A549 (cell line): ENCODE measurements at regions of chr15 and their contacts with region 1.

Region 1: DNA sequence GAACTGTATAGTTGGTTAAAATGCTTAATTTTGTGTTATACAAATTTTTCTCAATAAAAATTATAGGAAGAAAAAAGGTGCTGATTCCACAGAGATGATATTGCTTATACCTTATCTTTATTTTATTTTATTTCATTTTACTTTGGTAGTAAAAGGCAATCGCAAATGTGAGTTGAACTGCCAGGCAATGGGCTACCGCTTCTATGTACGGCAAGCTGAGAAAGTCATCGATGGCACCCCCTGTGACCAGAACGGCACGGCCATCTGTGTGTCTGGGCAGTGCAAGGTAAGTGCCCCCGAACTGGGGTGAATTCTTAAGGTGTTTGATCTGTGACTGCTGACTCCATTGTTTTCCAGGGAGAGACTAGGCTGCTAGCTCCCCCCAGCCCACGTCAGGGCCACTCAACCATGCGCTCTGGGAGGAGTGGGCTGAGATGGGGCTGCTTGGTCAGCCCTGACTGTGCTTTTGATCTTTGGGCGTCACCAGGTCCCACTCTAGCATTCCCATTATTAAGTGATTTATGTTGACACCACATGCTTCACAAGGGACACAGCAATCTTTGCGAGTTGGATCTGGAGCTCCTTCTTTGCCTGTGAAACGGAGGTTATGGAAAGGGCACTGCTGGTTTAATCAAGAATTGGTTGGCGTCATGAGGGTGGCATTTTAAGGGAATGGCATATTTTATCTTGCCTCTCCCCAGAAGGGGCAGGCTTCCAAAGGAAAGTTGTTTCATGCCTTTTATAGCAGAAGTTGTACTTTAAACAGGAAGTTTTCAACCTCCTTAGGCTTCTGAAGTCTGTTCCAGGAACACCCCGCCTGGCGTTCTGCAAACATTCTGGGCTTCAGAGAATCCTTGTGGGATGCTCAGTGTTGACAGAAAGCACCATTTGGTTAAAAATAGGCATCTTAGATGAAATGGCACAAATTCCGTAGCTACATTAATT is 296.5 kb downstream of the THSD4 start:
- DNase-seq: peak; percentile 74 to 98
- ATAC-seq: peak; percentile 92 to 93
- H3K4me3 ChIP-seq: peak overlapping the region; percentile 21
- H3K27ac ChIP-seq: peak overlapping the region; percentile 83 to 87
- H3K4me1 ChIP-seq: peaks cover 65% of the 10 kb centered on the region
- CTCF ChIP-seq: peak; percentile 37; the same call in 1 of the 3 replicates
- EP300 ChIP-seq: peak; percentile 93 to 97
- POLR2A ChIP-seq: no peak
- RAD21 ChIP-seq: peak in 1 of 2 experiments; percentile 38; a peak in 2 of 5 replicates

Region 2: GRCh38 chr15:71397377-71397776 is 14.4 kb before region 1 on chr15:
- CTCF ChIA-PET with region 1: interaction called, 12 read pairs
- POLR2A ChIA-PET with region 1: no interaction called
- DNase-seq: peak in 1 of 2 experiments; percentile 43
- ATAC-seq: no peak
- H3K4me3 ChIP-seq: no peak overlapping the region
- H3K27ac ChIP-seq: no peak overlapping the region; a peak in 1 of 6 replicates
- H3K4me1 ChIP-seq: peaks cover 12% of the 10 kb centered on the region
- CTCF ChIP-seq: no peak
- EP300 ChIP-seq: no peak
- POLR2A ChIP-seq: no peak
- RAD21 ChIP-seq: no peak

Region 3: DNA sequence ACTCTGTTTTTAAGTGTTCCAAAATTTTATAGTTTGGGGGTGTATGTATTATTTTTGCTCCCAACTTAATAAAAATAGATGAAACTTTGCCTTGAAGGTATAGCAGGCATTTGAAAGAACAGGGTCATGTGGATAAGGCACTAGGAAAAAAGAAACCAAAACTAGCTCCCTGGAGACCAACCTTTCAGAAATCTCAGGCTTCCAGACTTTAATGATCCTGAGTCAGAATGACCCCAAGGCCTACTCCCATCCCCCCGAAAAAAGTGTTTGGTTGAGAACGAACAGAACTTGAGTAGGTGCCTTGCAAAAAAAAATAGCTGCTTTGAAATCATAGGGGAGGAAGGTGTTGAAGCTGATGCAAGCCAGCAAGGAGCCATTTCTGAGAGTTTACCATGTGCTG is 13.0 kb after region 1 on chr15:
- CTCF ChIA-PET with region 1: interaction called, 48 read pairs
- POLR2A ChIA-PET with region 1: interaction called, 3 read pairs
- DNase-seq: no peak
- ATAC-seq: no peak
- H3K4me3 ChIP-seq: no peak overlapping the region
- H3K27ac ChIP-seq: peak overlapping the region; percentile 15 to 58; a peak in 4 of 6 replicates
- H3K4me1 ChIP-seq: 0 out of 3 replicates have a peak, but pooled peaks cover 7% of the 10 kb centered on the region
- CTCF ChIP-seq: no peak
- EP300 ChIP-seq: no peak
- POLR2A ChIP-seq: no peak
- RAD21 ChIP-seq: no peak

Region 4: GRCh38 chr15:71501344-71502076 is 89.7 kb after region 1 on chr15:
- CTCF ChIA-PET with region 1: no interaction called
- POLR2A ChIA-PET with region 1: no interaction called
- DNase-seq: no peak
- ATAC-seq: no peak
- H3K4me3 ChIP-seq: no peak overlapping the region
- H3K27ac ChIP-seq: no peak overlapping the region
- H3K4me1 ChIP-seq: no peaks in the 10 kb centered on the region
- CTCF ChIP-seq: no peak
- EP300 ChIP-seq: no peak
- POLR2A ChIP-seq: no peak
- RAD21 ChIP-seq: no peak